CD4-positive, alpha-beta T cell (primary cell): ENCODE measurements at regions of chr1 and their contacts with region 1.

Region 1: GRCh38 chr1:89125913-89126580 is at the start of gene GBP2:
- DNase-seq: peak in 7 of 14 experiments; percentile 18 to 86 (median 41)
- ATAC-seq: peak; percentile 81
- H3K4me3 ChIP-seq: peak within 1 kb of the TSS; percentile 83
- H3K4me3 Mint-ChIP-seq: peak within 1 kb of the TSS; percentile 100
- H3K27ac ChIP-seq: peak within 1 kb of the TSS; percentile 51 to 86
- H3K27ac Mint-ChIP-seq: peak within 1 kb of the TSS; percentile 96
- H3K4me1 ChIP-seq: peaks cover 23% of the 10 kb centered on the region
- H3K4me1 Mint-ChIP-seq: peaks cover 76% of the 10 kb centered on the region
- H3K27me3 ChIP-seq: no peaks in the 10 kb centered on the region
- H3K27me3 Mint-ChIP-seq: no peaks in the 10 kb centered on the region
- CTCF ChIP-seq: no peak
- total RNA-seq, gene GBP2: 87.6 to 91.8 TPM

Region 2: DNA sequence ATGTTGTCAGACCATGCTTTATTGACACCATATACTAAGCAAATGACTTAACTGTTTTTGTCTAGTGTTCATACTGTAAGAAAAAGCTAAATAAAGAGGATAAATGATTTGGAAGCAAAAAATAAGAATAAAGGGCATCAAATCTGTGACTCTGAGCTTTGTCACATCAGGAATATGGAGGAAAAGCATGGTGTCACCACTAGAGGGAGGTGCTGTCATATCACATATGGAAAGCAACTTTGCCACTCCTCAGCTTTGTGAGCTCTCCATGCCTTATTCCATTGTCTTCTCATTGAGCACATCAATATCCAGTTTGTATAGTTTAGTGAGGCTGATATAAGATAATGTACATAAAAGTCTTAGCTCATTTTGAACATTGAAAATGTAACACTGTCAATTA is 40.3 kb before region 1 on chr1:
- CTCF ChIA-PET with region 1: interaction called, 10 read pairs
- POLR2A ChIA-PET with region 1: interaction called, 7 read pairs
- intact Hi-C with region 1: no loop called
- DNase-seq: peak in 9 of 14 experiments; percentile 13 to 79 (median 48)
- ATAC-seq: peak; percentile 77
- H3K4me3 ChIP-seq: no peak overlapping the region
- H3K4me3 Mint-ChIP-seq: no peak overlapping the region
- H3K27ac ChIP-seq: no peak overlapping the region
- H3K27ac Mint-ChIP-seq: no peak overlapping the region
- H3K4me1 ChIP-seq: no peaks in the 10 kb centered on the region
- H3K4me1 Mint-ChIP-seq: no peaks in the 10 kb centered on the region
- H3K27me3 ChIP-seq: no peaks in the 10 kb centered on the region
- H3K27me3 Mint-ChIP-seq: no peaks in the 10 kb centered on the region
- CTCF ChIP-seq: peak; percentile 85

Region 3: DNA sequence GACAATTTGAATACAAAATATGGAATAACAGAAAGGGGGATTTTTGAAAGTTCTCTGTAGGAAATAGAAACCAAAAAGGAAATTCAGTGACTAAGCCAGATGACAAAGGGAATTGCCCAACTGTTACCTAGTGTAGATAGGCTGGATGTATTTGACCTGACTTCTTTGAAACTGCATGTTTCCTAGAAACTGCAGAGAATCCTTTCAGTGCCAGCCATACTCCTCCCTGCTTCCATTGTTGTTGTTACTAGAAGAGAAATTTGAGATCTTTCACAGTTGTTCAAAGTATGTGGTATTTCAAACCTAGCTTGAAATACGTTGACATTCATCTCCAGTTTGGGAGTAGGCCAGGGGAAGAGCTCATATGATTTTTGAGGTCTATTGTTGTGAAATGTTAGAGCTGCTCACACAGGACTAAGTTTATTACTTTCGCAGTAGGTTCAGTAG is 148.4 kb after region 1 on chr1:
- CTCF ChIA-PET with region 1: no interaction called
- POLR2A ChIA-PET with region 1: interaction called, 27 read pairs
- intact Hi-C with region 1: no loop called
- DNase-seq: peak in 3 of 14 experiments; percentile 78 to 81 (median 78)
- ATAC-seq: no peak
- H3K4me3 ChIP-seq: peak overlapping the region; percentile 24
- H3K4me3 Mint-ChIP-seq: peak overlapping the region; percentile 87
- H3K27ac ChIP-seq: peak overlapping the region; percentile 24 to 55
- H3K27ac Mint-ChIP-seq: peak overlapping the region; percentile 85
- H3K4me1 ChIP-seq: peaks cover 48% of the 10 kb centered on the region
- H3K4me1 Mint-ChIP-seq: peaks cover 83% of the 10 kb centered on the region
- H3K27me3 ChIP-seq: no peaks in the 10 kb centered on the region
- H3K27me3 Mint-ChIP-seq: no peaks in the 10 kb centered on the region
- CTCF ChIP-seq: no peak

Region 4: DNA sequence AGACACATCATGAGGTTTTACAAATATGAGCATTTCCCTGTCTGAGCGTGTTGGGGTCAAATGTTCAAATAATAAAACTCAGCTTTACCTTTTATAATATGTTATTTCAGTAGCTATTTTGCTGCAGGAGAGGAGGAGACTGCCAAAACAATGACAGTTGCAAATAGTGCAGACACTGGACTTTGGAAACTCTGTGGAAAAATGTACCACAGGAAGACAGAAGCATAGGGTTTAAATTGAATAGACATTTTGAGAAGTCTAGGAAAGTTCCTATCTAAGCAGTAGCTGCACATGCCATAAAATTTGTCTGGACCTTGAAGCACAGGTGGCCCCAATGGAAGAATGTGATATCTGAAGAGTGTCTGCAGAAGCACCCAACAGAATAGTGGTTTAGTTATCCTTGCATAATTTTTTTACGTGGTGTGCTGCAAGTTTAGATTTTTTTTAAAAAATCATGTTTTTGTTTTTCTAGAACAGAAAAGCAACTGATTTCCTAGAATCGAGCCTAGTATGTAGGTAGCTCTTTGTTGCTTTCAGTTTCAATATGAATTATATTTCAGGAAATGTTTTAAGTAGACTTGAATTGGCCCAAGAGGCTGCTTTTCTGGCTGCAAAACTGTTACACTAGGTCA is 160.6 kb after region 1 on chr1:
- CTCF ChIA-PET with region 1: no interaction called
- POLR2A ChIA-PET with region 1: interaction called, 44 read pairs
- intact Hi-C with region 1: loop called in 1 of 2 experiments (anchors 5 kb)
- DNase-seq: peak in 3 of 14 experiments; percentile 39 to 82 (median 48)
- ATAC-seq: peak; percentile 76
- H3K4me3 ChIP-seq: peak overlapping the region; percentile 28
- H3K4me3 Mint-ChIP-seq: peak overlapping the region; percentile 62
- H3K27ac ChIP-seq: peak overlapping the region; percentile 53 to 54
- H3K27ac Mint-ChIP-seq: peak overlapping the region; percentile 78
- H3K4me1 ChIP-seq: peaks cover 45% of the 10 kb centered on the region
- H3K4me1 Mint-ChIP-seq: peaks cover 61% of the 10 kb centered on the region
- H3K27me3 ChIP-seq: no peaks in the 10 kb centered on the region
- H3K27me3 Mint-ChIP-seq: no peaks in the 10 kb centered on the region
- CTCF ChIP-seq: no peak